Ovary (tissue), 10 donors: ENCODE measurements at regions of chr6 and their contacts with region 1.

Region 1: GRCh38 chr6:56637640-56638039 is 5.0 kb downstream of the DST start:
- DNase-seq: no peak
- H3K4me3 ChIP-seq: no peak overlapping the region
- H3K27ac ChIP-seq: no peak overlapping the region
- H3K4me1 ChIP-seq: no peaks in the 10 kb centered on the region
- H3K27me3 ChIP-seq: no peaks in the 10 kb centered on the region
- CTCF ChIP-seq: peak; percentile 48 to 68 (median 67)
- EP300 ChIP-seq: no peak
- POLR2A ChIP-seq: no peak

Region 2: DNA sequence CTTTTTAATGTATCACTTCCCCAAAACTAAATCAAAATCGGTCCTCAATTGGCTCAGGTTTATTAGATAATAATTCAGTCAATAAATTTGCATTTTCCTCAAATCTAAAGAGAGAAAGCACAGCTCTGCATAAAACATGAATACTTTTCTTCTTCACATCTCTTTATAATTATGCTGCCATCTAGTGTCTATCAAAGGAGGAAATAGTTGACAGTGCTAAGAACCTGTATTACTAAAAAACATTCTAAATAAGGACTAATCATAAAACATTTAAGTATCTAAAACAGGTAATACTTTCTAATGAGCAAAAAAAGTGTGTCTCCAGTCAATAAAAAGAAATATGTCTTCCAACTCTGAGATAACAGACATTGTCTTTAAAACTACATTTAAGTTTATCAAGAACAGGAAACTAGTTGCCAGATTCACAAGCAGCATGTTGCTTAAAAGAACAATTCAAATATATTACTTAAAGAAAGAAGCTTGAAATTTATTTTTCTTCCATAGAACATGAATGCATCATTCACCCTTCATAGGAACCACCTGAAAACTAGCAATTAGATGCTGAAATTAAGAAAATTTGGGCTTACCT is 61.5 kb after region 1 on chr6:
- intact Hi-C with region 1: loop called (anchors 5 kb)
- DNase-seq: no peak
- H3K4me3 ChIP-seq: no peak overlapping the region
- H3K27ac ChIP-seq: no peak overlapping the region
- H3K4me1 ChIP-seq: no peaks in the 10 kb centered on the region
- H3K27me3 ChIP-seq: no peaks in the 10 kb centered on the region
- CTCF ChIP-seq: peak in 2 of 3 donors; percentile 23 to 38
- EP300 ChIP-seq: no peak
- POLR2A ChIP-seq: no peak

Region 3: GRCh38 chr6:56851541-56852259 is 214.1 kb after region 1 on chr6:
- intact Hi-C with region 1: loop called in 3 of 4 experiments (anchors 5 kb)
- DNase-seq: peak; percentile 28 to 60 (median 36)
- H3K4me3 ChIP-seq: peak overlapping the region; percentile 38
- H3K27ac ChIP-seq: peak overlapping the region; percentile 31 to 51
- H3K4me1 ChIP-seq: peaks cover 5% of the 10 kb centered on the region
- H3K27me3 ChIP-seq: no peaks in the 10 kb centered on the region
- CTCF ChIP-seq: peak in 2 of 3 donors; percentile 73 to 80
- EP300 ChIP-seq: no peak
- POLR2A ChIP-seq: no peak

Region 4: DNA sequence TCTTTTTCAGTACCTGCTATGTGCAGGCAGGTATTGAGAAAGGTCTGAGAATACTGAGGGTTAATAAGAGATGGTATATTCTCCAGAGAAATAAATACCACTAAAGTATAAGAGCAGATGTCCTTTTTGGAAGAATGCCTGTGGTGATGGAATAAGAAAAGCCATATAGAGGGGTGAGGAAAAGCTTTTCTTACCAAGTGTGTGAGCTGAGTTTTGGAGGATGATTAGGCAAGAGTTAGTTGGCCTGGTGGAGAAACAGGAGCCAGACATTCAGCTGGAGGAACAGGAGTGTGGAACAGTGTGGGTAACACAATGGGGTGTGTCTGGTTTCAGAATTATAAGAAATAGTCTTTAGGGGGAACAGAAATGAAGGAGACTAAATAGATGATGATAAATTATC is 472.2 kb after region 1 on chr6:
- intact Hi-C with region 1: no loop called
- DNase-seq: no peak
- H3K4me3 ChIP-seq: no peak overlapping the region
- H3K27ac ChIP-seq: no peak overlapping the region
- H3K4me1 ChIP-seq: no peaks in the 10 kb centered on the region
- H3K27me3 ChIP-seq: no peaks in the 10 kb centered on the region
- CTCF ChIP-seq: no peak
- EP300 ChIP-seq: no peak
- POLR2A ChIP-seq: no peak